PC-9 (cell line): ENCODE measurements at regions of chr11 and their contacts with region 1.

Region 1: GRCh38 chr11:9613118-9613829 is 39.8 kb downstream of the WEE1 start:
- DNase-seq: peak; percentile 90 to 92
- H3K4me3 ChIP-seq: peak overlapping the region; percentile 75
- H3K27ac ChIP-seq: peak overlapping the region; percentile 96
- H3K4me1 ChIP-seq: peaks cover 25% of the 10 kb centered on the region
- H3K27me3 ChIP-seq: no peaks in the 10 kb centered on the region
- CTCF ChIP-seq: peak; percentile 87

Region 2: GRCh38 chr11:9030601-9031000 is 582.7 kb before region 1 on chr11:
- CTCF ChIA-PET with region 1: no interaction called
- POLR2A ChIA-PET with region 1: no interaction called
- intact Hi-C with region 1: no loop called
- DNase-seq: no peak
- H3K4me3 ChIP-seq: no peak overlapping the region
- H3K27ac ChIP-seq: no peak overlapping the region
- H3K4me1 ChIP-seq: no peaks in the 10 kb centered on the region
- H3K27me3 ChIP-seq: no peaks in the 10 kb centered on the region
- CTCF ChIP-seq: no peak

Region 3: DNA sequence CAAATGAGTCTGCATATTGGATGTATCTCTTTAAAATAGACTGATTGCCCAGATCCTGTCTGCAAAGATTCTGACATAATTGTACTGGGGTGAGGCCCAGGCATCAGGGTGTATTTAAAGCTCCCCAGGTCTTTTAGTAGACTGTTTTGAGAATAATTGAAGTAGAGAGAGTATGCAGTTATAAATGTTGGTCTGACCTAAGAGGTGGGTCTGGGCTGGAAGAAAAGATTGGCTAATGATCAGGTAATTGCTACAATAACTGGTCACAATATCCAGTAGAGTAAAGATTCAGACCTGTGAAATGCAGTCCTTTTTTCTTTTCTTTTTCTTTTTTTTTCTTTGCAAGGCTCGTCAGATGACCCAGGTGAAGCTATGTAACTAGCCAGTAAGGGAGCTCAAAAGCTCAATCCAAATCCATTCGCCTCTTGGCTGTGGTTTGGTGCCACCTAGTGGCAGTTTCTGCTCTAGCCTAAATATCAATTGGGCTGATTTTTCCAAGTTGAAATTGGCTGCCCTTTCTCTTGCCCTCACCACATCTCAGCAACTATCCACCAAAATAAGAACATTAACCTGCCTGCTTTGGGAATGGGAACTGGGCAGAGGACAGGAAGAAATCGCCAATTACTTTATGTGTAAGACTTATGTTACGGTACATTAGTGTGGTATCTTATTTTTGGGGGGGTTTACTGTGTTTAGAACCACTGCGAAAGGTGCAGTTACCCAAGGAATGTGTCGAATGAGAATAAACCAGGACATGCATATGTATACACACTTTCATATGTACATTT is 106.6 kb before region 1 on chr11:
- CTCF ChIA-PET with region 1: interaction called, 3 read pairs
- POLR2A ChIA-PET with region 1: no interaction called
- intact Hi-C with region 1: loop called (anchors 5 kb)
- DNase-seq: peak; percentile 49 to 62
- H3K4me3 ChIP-seq: no peak overlapping the region
- H3K27ac ChIP-seq: 0 out of 2 replicates have a peak overlapping the region, but pooled peaks have one; percentile 13
- H3K4me1 ChIP-seq: no peaks in the 10 kb centered on the region
- H3K27me3 ChIP-seq: no peaks in the 10 kb centered on the region
- CTCF ChIP-seq: peak; percentile 84

Region 4: DNA sequence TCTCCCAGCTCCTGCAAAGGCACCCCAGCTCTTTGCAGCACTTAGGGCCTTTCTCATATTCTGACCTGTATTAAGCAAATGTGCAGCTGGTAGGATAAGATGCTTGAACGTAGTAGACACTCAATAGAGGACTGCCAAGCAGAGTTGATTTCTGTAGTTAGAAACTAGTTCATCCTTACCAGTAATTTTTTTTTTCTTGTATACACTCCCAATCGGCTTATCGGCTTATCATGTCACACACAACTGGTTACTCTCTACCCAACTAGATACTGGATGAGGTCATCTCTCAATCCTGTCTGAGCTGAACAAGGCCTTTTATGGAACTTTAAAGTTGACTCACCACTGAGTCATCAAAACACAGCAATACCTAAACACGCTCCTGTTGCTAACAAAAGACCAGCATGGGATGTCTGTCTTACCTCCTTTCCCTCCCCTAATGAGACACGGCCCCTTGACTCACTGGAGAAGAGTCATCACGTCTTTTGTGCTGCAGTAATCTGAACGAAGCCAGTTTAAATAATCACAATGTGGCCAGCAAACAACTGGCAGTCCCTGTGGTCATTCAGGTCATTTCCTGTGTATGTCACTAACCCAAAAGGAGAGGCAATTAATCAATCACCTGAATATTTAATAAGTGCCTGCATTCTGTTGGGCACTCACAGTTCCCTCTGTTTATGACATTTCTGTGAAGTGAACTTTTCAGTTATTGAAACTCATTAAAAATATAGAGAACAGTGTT is 47.3 kb before region 1 on chr11:
- CTCF ChIA-PET with region 1: no interaction called
- POLR2A ChIA-PET with region 1: interaction called, 7 read pairs
- intact Hi-C with region 1: loop called (anchors 1 kb)
- DNase-seq: peak; percentile 76 to 99
- H3K4me3 ChIP-seq: peak overlapping the region; percentile 16; the same call in 1 of the 2 replicates
- H3K27ac ChIP-seq: peak overlapping the region; percentile 98
- H3K4me1 ChIP-seq: peaks cover 80% of the 10 kb centered on the region
- H3K27me3 ChIP-seq: no peaks in the 10 kb centered on the region
- CTCF ChIP-seq: no peak

Region 5: DNA sequence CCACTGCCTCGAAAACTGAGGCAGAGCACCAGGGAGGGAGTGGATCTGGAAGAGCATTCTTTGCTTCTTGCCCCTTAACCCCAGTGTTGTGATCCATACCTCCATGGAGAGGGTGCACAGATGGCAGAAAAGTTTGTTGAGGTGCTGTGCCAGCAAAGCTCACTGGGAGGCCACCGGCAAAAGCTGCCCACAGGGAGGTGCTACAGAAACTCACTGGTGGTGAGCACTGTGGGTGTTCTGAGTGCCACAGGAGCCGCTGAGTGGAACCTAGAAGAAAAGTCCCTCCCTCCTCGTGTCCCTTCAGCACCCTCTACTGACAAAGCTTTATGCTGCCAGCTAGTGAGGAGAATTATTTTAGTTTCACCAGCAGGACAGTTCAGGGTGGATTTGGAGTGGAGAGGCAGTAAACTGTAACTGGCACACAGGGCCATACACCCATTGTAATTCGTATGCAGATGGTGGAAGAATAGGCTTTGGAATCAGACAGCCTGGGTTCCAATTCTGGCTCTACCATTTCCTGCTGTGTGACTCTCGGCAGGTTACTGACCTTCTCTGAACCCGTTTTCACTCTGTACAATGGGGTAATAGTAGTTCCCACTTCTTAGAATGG is 135.2 kb after region 1 on chr11:
- CTCF ChIA-PET with region 1: interaction called, 3 read pairs
- POLR2A ChIA-PET with region 1: no interaction called
- intact Hi-C with region 1: loop called (anchors 2 kb)
- DNase-seq: peak; percentile 25 to 44
- H3K4me3 ChIP-seq: no peak overlapping the region
- H3K27ac ChIP-seq: no peak overlapping the region
- H3K4me1 ChIP-seq: 0 out of 2 replicates have a peak, but pooled peaks cover under 1% of the 10 kb centered on the region
- H3K27me3 ChIP-seq: no peaks in the 10 kb centered on the region
- CTCF ChIP-seq: peak; percentile 58

Region 6: GRCh38 chr11:10272132-10272531 is 658.9 kb after region 1 on chr11:
- CTCF ChIA-PET with region 1: no interaction called
- POLR2A ChIA-PET with region 1: no interaction called
- intact Hi-C with region 1: no loop called
- DNase-seq: no peak
- H3K4me3 ChIP-seq: no peak overlapping the region
- H3K27ac ChIP-seq: no peak overlapping the region
- H3K4me1 ChIP-seq: no peaks in the 10 kb centered on the region
- H3K27me3 ChIP-seq: no peaks in the 10 kb centered on the region
- CTCF ChIP-seq: no peak